Heart right ventricle (tissue), 16 donors: ENCODE measurements at regions of chr2 and their contacts with region 1.

Region 1: GRCh38 chr2:63692002-63692606 is 103.3 kb downstream of the MDH1 start:
- DNase-seq: no peak
- ATAC-seq: peak in 3 of 8 donors; percentile 39 to 55 (median 42)
- H3K4me3 ChIP-seq: no peak overlapping the region
- H3K27ac ChIP-seq: no peak overlapping the region
- H3K4me1 ChIP-seq: peaks cover 0 to 4% (median 0%) of the 10 kb centered on the region in 9 donors
- H3K27me3 ChIP-seq: no peaks in the 10 kb centered on the region
- CTCF ChIP-seq: peak in 8 of 9 donors; percentile 16 to 72 (median 62)

Region 2: DNA sequence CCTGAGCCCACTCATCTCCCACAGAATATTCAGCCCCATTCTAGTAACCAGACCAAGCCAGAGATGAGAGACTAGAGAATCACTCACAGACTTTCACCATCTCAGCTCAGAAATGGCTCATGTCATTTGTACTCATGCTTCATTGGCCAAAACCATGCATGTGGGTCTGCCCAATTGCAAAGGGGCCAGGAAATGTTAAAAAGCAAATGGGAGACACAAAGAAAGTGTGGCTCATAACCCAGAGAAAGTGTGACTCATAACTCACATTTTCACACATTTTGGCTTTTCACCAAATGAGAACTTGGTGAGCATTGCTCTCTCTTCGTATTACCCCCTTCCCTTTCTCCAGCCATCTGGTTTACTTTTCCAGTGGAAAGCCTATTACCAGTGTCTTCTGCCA is 37.1 kb before region 1 on chr2:
- intact Hi-C with region 1: no loop called
- DNase-seq: no peak
- ATAC-seq: no peak
- H3K4me3 ChIP-seq: no peak overlapping the region
- H3K27ac ChIP-seq: no peak overlapping the region
- H3K4me1 ChIP-seq: peaks cover 0 to 5% (median 0%) of the 10 kb centered on the region in 9 donors
- H3K27me3 ChIP-seq: no peaks in the 10 kb centered on the region
- CTCF ChIP-seq: no peak

Region 3: GRCh38 chr2:63861220-63861822 is 169.2 kb after region 1 on chr2:
- intact Hi-C with region 1: loop called in 8 of 10 experiments (anchors 2 to 5 kb)
- DNase-seq: peak in 1 of 2 donors; percentile 61
- ATAC-seq: peak in 7 of 8 donors; percentile 50 to 86 (median 66)
- H3K4me3 ChIP-seq: no peak overlapping the region
- H3K27ac ChIP-seq: peak overlapping the region in 6 of 10 donors; percentile 9 to 46 (median 16)
- H3K4me1 ChIP-seq: peaks cover 0 to 40% (median 28%) of the 10 kb centered on the region in 9 donors
- H3K27me3 ChIP-seq: no peaks in the 10 kb centered on the region
- CTCF ChIP-seq: peak; percentile 33 to 72 (median 61)

Region 4: DNA sequence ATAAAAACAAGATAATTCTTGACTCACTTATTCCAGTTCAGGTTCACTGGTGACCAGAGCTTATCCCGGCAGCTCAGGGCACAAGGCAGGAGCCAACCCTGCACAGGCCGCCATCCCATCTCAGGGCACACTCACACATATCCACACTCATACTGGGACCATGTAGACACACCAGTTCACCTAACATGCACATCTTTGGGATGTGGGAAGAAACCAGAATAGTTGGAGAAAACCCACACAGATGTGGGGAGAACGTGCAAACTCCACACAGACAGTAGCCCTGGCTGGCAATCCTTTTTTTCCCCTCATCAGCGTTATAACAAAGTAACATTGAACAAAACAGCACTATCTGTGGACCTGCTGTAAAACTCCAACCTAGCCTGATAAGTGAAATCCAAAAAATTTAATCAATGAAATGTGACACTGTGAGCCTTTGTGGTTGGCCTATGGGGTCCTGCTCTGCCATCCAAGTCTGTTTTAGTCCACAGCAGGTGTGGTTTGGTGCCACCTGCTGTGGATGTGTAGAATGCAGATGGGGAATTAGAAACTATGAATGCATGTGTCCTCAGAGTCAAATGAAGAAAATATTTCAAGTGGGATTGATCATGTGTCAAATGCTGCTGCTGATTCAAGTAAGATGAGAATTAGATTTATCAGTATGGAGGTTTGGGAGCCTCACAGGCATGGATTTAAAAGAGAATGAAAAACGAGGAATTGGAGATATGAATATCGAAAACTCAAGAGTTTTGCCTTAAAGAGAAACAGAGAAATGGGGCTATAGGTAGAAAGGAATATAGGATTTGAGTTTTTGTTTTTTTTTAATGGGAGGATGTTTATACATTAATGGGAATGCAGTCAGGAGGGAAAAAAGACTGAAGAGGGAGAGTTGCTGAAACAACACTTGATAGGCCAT is 196.6 kb after region 1 on chr2:
- intact Hi-C with region 1: loop called in 3 of 10 experiments (anchors 5 to 10 kb)
- DNase-seq: peak in 1 of 2 donors; percentile 8
- ATAC-seq: peak in 7 of 8 donors; percentile 49 to 82 (median 79)
- H3K4me3 ChIP-seq: no peak overlapping the region
- H3K27ac ChIP-seq: peak overlapping the region in 1 of 10 donors; percentile 11
- H3K4me1 ChIP-seq: peaks cover 0 to 25% (median 0%) of the 10 kb centered on the region in 9 donors
- H3K27me3 ChIP-seq: no peaks in the 10 kb centered on the region
- CTCF ChIP-seq: peak in 8 of 9 donors; percentile 41 to 77 (median 68)